ENCODE measurements at regions of chr6 and their contacts with region 1.

Region 1: DNA sequence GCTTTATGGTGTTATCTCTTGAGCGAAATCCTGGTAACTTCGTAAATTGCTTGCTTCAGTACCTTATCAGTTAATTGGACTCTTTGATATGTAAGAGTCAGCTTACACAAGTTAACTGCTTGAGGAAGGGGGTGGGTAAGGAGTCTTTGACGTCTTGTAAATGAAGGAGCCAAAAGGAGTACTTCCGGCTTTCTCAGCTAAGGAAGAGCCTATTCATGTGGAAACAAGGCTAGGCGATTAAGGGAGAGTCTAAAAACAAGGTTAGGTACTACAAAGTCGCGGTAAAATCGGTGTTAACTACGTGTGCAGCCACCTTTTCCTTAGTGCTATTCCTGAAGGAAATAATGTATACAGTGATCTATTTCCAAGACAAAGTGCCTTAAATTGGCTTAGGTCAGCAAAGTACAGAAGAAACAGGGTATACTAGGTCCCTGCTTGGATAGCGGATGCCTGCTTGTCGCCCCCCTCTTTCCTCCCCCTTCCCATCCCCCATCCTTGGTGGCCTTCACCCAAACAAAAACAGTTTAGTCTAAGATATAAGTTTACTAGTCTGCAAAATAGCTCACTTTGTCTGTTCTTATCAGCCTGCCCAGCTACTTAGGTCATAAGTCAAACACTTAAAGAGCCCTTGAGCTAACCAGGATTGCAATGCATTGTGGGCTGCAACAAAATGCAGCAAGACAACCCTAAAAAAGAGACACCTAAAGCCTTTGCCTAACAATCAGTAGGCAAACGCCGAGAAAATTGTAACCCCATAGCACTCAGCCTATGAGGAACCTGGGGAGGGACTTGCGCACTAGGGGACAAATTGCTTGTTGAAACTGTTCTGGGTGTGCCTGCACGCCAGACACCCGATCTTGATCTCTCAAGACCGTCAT is 147.3 kb downstream of the TRIM27 start:
- DNase-seq: peak; percentile 33
- ATAC-seq: no peak
- H3K4me3 ChIP-seq: no peak overlapping the region
- H3K4me3 Mint-ChIP-seq: no peak overlapping the region
- H3K27ac ChIP-seq: no peak overlapping the region
- H3K27ac Mint-ChIP-seq: no peak overlapping the region
- H3K4me1 ChIP-seq: peaks cover 1 to 8% of the 10 kb centered on the region in 2 donors
- H3K4me1 Mint-ChIP-seq: peaks cover 7% of the 10 kb centered on the region
- H3K27me3 ChIP-seq: peaks cover 0 to 92% (median 79%) of the 10 kb centered on the region in 4 experiments
- H3K27me3 Mint-ChIP-seq: peaks cover 87% of the 10 kb centered on the region
- CTCF ChIP-seq: no peak

Region 2: DNA sequence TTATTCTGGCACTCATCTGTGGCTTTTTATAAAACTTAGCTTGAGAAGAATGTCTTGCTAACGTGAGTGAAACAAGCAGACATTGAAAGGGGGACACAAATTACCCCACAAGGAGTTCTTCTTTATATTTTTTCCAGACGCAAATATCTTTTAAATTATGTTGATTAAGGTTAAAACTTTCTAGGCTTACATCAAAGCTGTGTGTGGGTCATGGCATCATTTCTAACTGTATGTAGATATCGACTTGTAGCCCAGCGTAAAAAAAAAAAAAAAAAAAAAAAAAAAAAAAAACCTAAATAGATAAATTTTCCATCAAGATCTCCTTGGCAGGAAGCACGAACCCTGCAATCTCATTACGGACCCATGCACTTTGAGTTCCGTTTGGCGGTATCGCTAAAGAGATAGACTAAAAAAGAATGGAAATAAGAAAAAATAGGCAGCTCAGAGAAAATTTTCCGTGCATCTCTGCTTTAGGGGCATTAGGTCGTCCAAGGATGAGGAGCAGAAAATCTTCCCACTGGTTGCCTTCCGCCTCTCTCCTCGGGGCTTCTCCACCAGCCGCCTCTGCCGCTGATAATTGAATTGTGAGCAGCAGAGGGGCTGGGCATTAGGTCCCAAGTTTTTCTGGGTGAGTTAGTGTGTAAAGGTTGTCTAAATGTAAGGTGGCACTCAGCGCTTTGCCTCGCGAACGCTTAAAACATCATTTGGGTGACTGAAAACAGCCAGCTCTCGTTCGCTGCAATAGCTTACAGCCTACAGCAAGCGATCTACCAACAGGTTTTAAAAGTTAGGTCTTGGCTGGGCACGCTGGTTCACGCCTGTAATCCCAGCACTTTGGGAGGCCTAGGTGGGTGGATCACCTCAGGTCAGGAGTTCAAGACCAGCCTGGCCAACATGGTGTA is 46.8 kb before region 1 on chr6:
- CTCF ChIA-PET with region 1: interaction called, 3 read pairs
- POLR2A ChIA-PET with region 1: no interaction called
- intact Hi-C with region 1: loop called (anchors 5 kb)
- DNase-seq: no peak
- ATAC-seq: no peak
- H3K4me3 ChIP-seq: peak overlapping the region in 2 of 5 experiments; percentile 53 to 57
- H3K4me3 Mint-ChIP-seq: peak overlapping the region; percentile 80
- H3K27ac ChIP-seq: no peak overlapping the region
- H3K27ac Mint-ChIP-seq: no peak overlapping the region
- H3K4me1 ChIP-seq: peaks cover 9 to 18% of the 10 kb centered on the region in 2 donors
- H3K4me1 Mint-ChIP-seq: peaks cover 16% of the 10 kb centered on the region
- H3K27me3 ChIP-seq: peaks cover 0 to 65% (median 50%) of the 10 kb centered on the region in 4 experiments
- H3K27me3 Mint-ChIP-seq: peaks cover 79% of the 10 kb centered on the region
- CTCF ChIP-seq: no peak

Region 3: DNA sequence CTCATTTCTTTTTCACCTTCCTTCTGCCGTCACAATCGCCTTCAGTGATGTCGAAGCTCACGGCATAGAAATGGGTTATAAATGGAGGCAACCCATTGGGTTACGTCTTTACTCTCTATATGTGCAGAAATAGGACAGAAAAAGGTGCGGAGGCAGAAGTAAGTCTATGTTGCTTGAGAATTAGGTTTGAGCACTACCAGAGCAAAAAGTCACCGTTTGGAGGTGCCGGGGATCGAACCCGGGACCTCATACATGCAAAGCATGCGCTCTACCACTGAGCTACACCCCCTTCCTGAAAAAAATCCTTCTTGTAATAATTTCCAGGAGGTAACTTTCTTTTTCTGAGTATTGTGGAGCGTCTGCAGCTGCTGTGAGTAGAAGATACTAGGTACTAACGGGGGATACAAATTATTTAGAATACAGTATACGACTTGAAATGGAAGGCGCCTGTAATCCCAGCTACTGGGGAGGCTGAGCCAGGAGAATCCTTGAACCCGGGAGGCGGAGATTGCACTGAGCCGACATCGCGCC is 13.1 kb after region 1 on chr6:
- CTCF ChIA-PET with region 1: no interaction called
- POLR2A ChIA-PET with region 1: interaction called, 14 read pairs
- intact Hi-C with region 1: no loop called
- DNase-seq: peak; percentile 26
- ATAC-seq: no peak
- H3K4me3 ChIP-seq: no peak overlapping the region
- H3K4me3 Mint-ChIP-seq: no peak overlapping the region
- H3K27ac ChIP-seq: no peak overlapping the region
- H3K27ac Mint-ChIP-seq: no peak overlapping the region
- H3K4me1 ChIP-seq: peaks cover 6 to 17% of the 10 kb centered on the region in 2 donors
- H3K4me1 Mint-ChIP-seq: peaks cover 8% of the 10 kb centered on the region
- H3K27me3 ChIP-seq: peaks cover 0 to 88% (median 69%) of the 10 kb centered on the region in 4 experiments
- H3K27me3 Mint-ChIP-seq: peaks cover 80% of the 10 kb centered on the region
- CTCF ChIP-seq: no peak

Measured in B cell (primary cell).